CD8-positive, alpha-beta T cell (primary cell): ENCODE measurements at regions of chr18 and their contacts with region 1.

Region 1: DNA sequence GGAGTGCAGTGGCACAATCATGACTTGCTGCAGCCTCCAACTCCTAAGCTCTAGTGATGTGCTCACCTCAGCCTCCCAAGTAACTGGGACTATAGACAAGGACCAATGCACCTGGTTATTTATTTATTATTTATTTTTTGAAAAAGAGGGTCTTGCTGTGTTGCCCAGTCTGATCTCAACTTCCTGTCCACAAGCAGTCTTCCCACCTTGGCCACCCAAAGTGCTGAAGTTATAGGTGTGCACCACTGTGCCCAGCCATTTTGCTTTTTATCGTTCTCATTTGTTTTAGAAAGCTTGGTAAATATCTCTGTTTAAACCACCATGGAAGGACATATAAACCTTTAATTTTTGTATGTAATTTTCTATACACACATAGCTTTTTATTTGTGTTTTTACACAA is 74.2 kb downstream of the SMCHD1 start:
- DNase-seq: no peak
- ATAC-seq: no peak
- H3K4me3 ChIP-seq: no peak overlapping the region
- H3K4me3 Mint-ChIP-seq: no peak overlapping the region
- H3K27ac ChIP-seq: no peak overlapping the region
- H3K27ac Mint-ChIP-seq: no peak overlapping the region
- H3K4me1 ChIP-seq: no peaks in the 10 kb centered on the region
- H3K4me1 Mint-ChIP-seq: peaks cover 15% of the 10 kb centered on the region
- H3K27me3 ChIP-seq: no peaks in the 10 kb centered on the region
- H3K27me3 Mint-ChIP-seq: no peaks in the 10 kb centered on the region
- CTCF ChIP-seq: no peak

Region 2: GRCh38 chr18:2687390-2688001 is 42.3 kb before region 1 on chr18:
- CTCF ChIA-PET with region 1: no interaction called
- POLR2A ChIA-PET with region 1: interaction called, 5 read pairs
- intact Hi-C with region 1: loop called (anchors 5 kb)
- DNase-seq: no peak
- ATAC-seq: no peak
- H3K4me3 ChIP-seq: no peak overlapping the region
- H3K4me3 Mint-ChIP-seq: peak overlapping the region; percentile 38
- H3K27ac ChIP-seq: peak overlapping the region in 1 of 2 experiments; percentile 26
- H3K27ac Mint-ChIP-seq: peak overlapping the region; percentile 23
- H3K4me1 ChIP-seq: peaks cover 27% of the 10 kb centered on the region
- H3K4me1 Mint-ChIP-seq: peaks cover 64% of the 10 kb centered on the region
- H3K27me3 ChIP-seq: no peaks in the 10 kb centered on the region
- H3K27me3 Mint-ChIP-seq: no peaks in the 10 kb centered on the region
- CTCF ChIP-seq: no peak

Region 3: GRCh38 chr18:2692508-2692907 is 37.2 kb before region 1 on chr18:
- CTCF ChIA-PET with region 1: no interaction called
- POLR2A ChIA-PET with region 1: no interaction called
- intact Hi-C with region 1: loop called (anchors 5 kb)
- DNase-seq: no peak
- ATAC-seq: no peak
- H3K4me3 ChIP-seq: no peak overlapping the region
- H3K4me3 Mint-ChIP-seq: no peak overlapping the region
- H3K27ac ChIP-seq: no peak overlapping the region
- H3K27ac Mint-ChIP-seq: peak overlapping the region; percentile 20
- H3K4me1 ChIP-seq: peaks cover 14% of the 10 kb centered on the region
- H3K4me1 Mint-ChIP-seq: peaks cover 46% of the 10 kb centered on the region
- H3K27me3 ChIP-seq: no peaks in the 10 kb centered on the region
- H3K27me3 Mint-ChIP-seq: no peaks in the 10 kb centered on the region
- CTCF ChIP-seq: no peak

Region 4: DNA sequence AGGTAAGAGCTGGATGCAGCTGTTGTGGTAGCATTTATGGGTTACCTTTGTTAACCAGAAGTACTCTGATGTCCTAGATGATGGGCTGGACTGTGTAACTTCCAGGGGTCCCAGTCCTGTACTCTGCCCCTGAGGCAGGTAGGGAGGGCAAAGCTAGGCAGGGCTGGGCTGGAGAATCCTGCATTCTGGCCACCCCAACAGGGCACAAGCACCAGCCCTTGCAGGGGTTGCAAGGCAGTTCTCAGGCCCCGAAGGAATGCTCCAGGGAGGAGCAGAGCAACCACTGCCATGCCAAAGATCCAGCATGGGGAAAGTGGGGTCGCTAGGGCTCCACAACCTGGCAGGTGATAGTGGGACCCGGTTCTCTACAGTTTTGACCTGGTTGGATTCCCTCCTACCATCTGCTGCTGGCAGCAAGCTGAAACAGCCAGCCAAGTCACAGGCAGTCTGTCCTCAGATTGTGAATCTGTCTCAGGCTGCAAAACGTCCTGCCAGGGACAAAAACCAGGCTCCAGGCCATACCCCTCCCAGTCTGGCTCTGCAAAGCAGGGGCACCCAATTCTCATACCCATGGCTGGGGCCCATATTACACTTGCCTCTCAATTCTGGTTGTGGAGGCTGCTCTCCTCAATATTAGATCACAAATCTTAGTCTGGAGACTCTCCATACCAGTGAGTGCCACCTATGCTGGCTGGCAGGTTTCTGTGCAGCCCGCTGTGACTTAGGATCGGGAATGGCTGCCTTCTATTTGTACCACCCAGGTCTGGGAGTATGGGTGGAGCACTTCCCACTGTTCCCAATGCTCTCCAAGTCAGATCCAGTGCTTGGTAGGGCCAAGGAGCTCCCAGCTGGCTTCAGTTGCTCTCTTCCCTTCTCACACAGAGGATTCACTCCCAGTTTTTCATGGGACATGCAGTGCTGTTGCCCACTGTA is 13.1 kb before region 1 on chr18:
- CTCF ChIA-PET with region 1: no interaction called
- POLR2A ChIA-PET with region 1: no interaction called
- intact Hi-C with region 1: loop called in 1 of 2 experiments (anchors 2 kb)
- DNase-seq: no peak
- ATAC-seq: no peak
- H3K4me3 ChIP-seq: no peak overlapping the region
- H3K4me3 Mint-ChIP-seq: no peak overlapping the region
- H3K27ac ChIP-seq: peak overlapping the region in 1 of 2 experiments; percentile 22
- H3K27ac Mint-ChIP-seq: no peak overlapping the region
- H3K4me1 ChIP-seq: peaks cover 13% of the 10 kb centered on the region
- H3K4me1 Mint-ChIP-seq: peaks cover 56% of the 10 kb centered on the region
- H3K27me3 ChIP-seq: no peaks in the 10 kb centered on the region
- H3K27me3 Mint-ChIP-seq: no peaks in the 10 kb centered on the region
- CTCF ChIP-seq: no peak

Region 5: DNA sequence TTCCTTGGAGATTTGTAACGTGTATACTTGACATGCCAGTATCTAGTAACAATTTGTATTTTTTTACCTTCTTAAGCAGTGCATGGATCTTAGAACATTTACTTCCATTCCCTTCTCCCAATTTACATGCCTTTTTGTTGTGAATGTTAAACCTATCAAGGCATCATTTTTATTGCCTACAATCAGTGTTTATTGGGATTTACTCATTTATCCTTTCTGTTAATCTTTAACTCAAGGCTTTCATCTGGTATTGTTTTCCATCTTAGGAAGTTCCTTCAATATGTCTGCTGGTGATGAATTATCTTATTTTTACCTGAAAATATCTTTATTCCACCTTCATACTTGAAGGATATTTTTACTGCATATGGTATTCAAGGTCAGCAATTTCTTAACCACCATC is 28.6 kb after region 1 on chr18:
- CTCF ChIA-PET with region 1: no interaction called
- POLR2A ChIA-PET with region 1: no interaction called
- intact Hi-C with region 1: loop called in 1 of 2 experiments (anchors 5 kb)
- DNase-seq: no peak
- ATAC-seq: no peak
- H3K4me3 ChIP-seq: no peak overlapping the region
- H3K4me3 Mint-ChIP-seq: no peak overlapping the region
- H3K27ac ChIP-seq: no peak overlapping the region
- H3K27ac Mint-ChIP-seq: peak overlapping the region; percentile 37
- H3K4me1 ChIP-seq: no peaks in the 10 kb centered on the region
- H3K4me1 Mint-ChIP-seq: peaks cover 26% of the 10 kb centered on the region
- H3K27me3 ChIP-seq: no peaks in the 10 kb centered on the region
- H3K27me3 Mint-ChIP-seq: no peaks in the 10 kb centered on the region
- CTCF ChIP-seq: no peak

Region 6: DNA sequence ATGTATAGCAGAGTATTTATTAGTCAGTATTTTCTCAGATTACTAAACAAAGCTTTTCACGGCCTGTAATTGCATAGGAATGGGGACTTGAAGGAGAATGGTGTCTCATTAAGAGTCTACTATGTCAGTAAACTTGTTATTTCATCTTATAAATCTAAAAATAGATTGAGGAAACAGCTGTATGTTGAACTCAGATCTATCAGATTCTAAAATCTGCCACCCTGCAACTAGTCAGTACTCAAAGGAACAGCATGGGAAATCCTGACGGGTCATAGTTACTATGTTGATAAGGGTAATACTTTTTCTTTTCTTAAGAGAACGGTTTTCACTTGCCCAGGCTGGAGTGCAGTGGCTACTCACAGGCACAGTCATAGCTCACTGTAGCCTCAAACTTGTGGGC is 46.8 kb after region 1 on chr18:
- CTCF ChIA-PET with region 1: no interaction called
- POLR2A ChIA-PET with region 1: no interaction called
- intact Hi-C with region 1: loop called in 1 of 2 experiments (anchors 5 kb)
- DNase-seq: no peak
- ATAC-seq: no peak
- H3K4me3 ChIP-seq: no peak overlapping the region
- H3K4me3 Mint-ChIP-seq: no peak overlapping the region
- H3K27ac ChIP-seq: no peak overlapping the region
- H3K27ac Mint-ChIP-seq: no peak overlapping the region
- H3K4me1 ChIP-seq: no peaks in the 10 kb centered on the region
- H3K4me1 Mint-ChIP-seq: peaks cover 2% of the 10 kb centered on the region
- H3K27me3 ChIP-seq: no peaks in the 10 kb centered on the region
- H3K27me3 Mint-ChIP-seq: no peaks in the 10 kb centered on the region
- CTCF ChIP-seq: no peak

Region 7: GRCh38 chr18:2794159-2794558 is 64.4 kb after region 1 on chr18:
- CTCF ChIA-PET with region 1: no interaction called
- POLR2A ChIA-PET with region 1: no interaction called
- intact Hi-C with region 1: loop called in 1 of 2 experiments (anchors 5 kb)
- DNase-seq: no peak
- ATAC-seq: no peak
- H3K4me3 ChIP-seq: no peak overlapping the region
- H3K4me3 Mint-ChIP-seq: no peak overlapping the region
- H3K27ac ChIP-seq: no peak overlapping the region
- H3K27ac Mint-ChIP-seq: no peak overlapping the region
- H3K4me1 ChIP-seq: no peaks in the 10 kb centered on the region
- H3K4me1 Mint-ChIP-seq: peaks cover 9% of the 10 kb centered on the region
- H3K27me3 ChIP-seq: no peaks in the 10 kb centered on the region
- H3K27me3 Mint-ChIP-seq: no peaks in the 10 kb centered on the region
- CTCF ChIP-seq: no peak

Region 8: DNA sequence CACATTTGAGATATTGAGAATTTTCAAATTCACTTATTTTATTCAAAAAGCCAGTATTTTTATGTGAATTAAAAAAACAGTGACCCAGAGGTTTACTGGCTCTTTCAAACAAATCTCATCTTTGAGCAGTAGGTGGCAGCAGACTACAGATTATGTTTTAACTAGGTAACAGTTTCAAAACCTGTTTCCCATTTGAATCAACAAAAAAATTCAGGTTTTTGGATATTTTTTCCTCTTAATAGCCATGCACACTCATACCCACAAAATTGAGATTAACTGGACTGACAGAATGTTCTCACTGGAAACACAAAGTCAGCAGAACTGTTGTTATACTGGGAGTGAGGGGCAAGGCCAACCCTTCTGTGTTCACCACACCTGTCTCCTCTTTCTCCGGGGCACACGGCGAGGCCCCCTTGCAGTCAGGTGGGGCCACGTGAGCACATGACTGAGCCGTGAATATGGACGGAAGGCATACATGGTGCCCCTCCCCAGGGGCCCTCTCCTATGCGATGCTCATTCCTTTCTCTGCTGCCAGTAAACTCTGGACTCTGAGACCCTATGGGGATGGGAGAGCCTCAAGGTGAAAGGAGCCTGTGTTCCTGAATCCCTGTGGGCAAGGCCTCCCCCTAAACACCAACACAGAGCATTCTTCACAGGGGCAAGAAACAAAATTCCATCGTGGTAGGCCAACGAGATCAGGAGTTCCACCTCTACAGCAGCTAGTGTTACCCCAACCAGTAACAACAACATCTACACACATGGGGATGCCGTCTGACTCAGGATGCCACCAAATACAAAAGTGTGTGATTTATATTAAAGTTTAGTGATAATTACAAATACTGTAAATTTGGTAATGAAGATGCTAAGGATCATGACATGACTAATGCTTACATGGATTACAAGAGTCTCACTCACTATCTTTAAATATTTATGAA is 202.8 kb after region 1 on chr18:
- CTCF ChIA-PET with region 1: no interaction called
- POLR2A ChIA-PET with region 1: no interaction called
- intact Hi-C with region 1: no loop called
- DNase-seq: peak in 6 of 9 experiments; percentile 37 to 82 (median 52)
- ATAC-seq: peak; percentile 79
- H3K4me3 ChIP-seq: no peak overlapping the region
- H3K4me3 Mint-ChIP-seq: no peak overlapping the region
- H3K27ac ChIP-seq: peak overlapping the region in 1 of 2 experiments; percentile 51
- H3K27ac Mint-ChIP-seq: peak overlapping the region; percentile 89
- H3K4me1 ChIP-seq: peaks cover 6% of the 10 kb centered on the region
- H3K4me1 Mint-ChIP-seq: peaks cover 23% of the 10 kb centered on the region
- H3K27me3 ChIP-seq: no peaks in the 10 kb centered on the region
- H3K27me3 Mint-ChIP-seq: no peaks in the 10 kb centered on the region
- CTCF ChIP-seq: peak; percentile 96